Heart right ventricle (tissue), 16 donors: ENCODE measurements at regions of chr16 and their contacts with region 1.

Region 1: GRCh38 chr16:30874821-30875717 is 18.8 kb downstream of the BCL7C start:
- DNase-seq: peak; percentile 91 to 93
- ATAC-seq: peak; percentile 98 to 100 (median 99)
- H3K4me3 ChIP-seq: peak overlapping the region; percentile 48 to 91 (median 82)
- H3K27ac ChIP-seq: peak overlapping the region; percentile 63 to 98 (median 94)
- H3K4me1 ChIP-seq: peaks cover 9 to 35% (median 24%) of the 10 kb centered on the region in 9 donors
- H3K27me3 ChIP-seq: no peaks in the 10 kb centered on the region
- CTCF ChIP-seq: peak in 1 of 9 donors; percentile 18

Region 2: DNA sequence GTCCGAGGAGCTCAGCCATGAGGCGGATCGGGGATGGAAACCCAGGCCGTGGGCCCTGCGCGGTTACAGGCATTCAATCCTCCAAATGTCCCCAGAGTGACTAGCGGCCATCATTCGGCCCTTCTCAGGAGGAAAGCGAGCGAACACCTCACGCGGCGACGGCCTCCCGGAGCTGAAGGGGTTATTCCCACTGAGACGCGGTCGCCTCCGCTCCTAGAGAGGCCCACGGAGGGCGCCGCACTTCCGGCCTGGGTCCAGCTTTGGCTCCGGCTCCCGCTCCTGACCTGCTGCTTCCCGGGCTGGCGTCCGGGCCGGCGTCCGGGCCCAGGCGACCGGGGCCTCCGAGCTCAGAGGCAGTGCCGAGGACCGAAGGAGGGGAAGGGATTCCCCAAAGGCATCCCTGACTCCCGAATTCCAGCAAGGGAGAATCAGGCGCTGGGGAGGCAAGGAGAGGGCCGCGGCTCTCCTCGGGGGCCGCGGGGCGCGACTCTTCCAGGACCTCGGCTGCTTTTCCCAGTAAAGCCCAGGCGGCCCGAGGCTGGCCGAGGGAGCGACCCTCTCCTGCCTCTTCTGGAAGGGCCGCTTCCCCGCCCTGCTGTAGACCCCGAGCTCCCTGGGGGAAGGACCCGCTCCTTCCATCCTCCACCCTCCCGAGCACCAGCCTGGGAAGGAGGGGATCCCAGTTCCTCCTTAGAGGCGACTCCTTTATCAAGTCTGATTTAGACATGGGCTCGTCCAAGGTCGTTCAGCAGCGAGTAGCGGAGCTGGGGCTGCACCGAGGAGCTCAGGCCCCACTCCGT is 69.5 kb before region 1 on chr16:
- intact Hi-C with region 1: loop called in 1 of 10 experiments (anchors 10 kb)
- DNase-seq: peak; percentile 90 to 91
- ATAC-seq: peak; percentile 96 to 98 (median 98)
- H3K4me3 ChIP-seq: peak overlapping the region; percentile 44 to 89 (median 78)
- H3K27ac ChIP-seq: peak overlapping the region; percentile 87 to 99 (median 94)
- H3K4me1 ChIP-seq: peaks cover 0 to 27% (median 19%) of the 10 kb centered on the region in 9 donors
- H3K27me3 ChIP-seq: no peaks in the 10 kb centered on the region
- CTCF ChIP-seq: peak in 2 of 9 donors; percentile 18 to 27

Region 3: GRCh38 chr16:30893744-30894539 is 18.9 kb after region 1 on chr16 and contains the start of gene BCL7C:
- intact Hi-C with region 1: loop called in 2 of 10 experiments (anchors 2 kb)
- DNase-seq: peak; percentile 94 to 96
- ATAC-seq: peak; percentile 70 to 89 (median 86)
- H3K4me3 ChIP-seq: peak within 1 kb of the TSS; percentile 73 to 100 (median 94)
- H3K27ac ChIP-seq: peak within 1 kb of the TSS; percentile 92 to 100 (median 97)
- H3K4me1 ChIP-seq: peaks cover 13 to 48% (median 36%) of the 10 kb centered on the region in 9 donors
- H3K27me3 ChIP-seq: no peaks in the 10 kb centered on the region
- CTCF ChIP-seq: peak in 8 of 9 donors; percentile 37 to 81 (median 58)
- total RNA-seq, gene BCL7C: 24.2 to 31.3 (median 27.0) TPM

Region 4: DNA sequence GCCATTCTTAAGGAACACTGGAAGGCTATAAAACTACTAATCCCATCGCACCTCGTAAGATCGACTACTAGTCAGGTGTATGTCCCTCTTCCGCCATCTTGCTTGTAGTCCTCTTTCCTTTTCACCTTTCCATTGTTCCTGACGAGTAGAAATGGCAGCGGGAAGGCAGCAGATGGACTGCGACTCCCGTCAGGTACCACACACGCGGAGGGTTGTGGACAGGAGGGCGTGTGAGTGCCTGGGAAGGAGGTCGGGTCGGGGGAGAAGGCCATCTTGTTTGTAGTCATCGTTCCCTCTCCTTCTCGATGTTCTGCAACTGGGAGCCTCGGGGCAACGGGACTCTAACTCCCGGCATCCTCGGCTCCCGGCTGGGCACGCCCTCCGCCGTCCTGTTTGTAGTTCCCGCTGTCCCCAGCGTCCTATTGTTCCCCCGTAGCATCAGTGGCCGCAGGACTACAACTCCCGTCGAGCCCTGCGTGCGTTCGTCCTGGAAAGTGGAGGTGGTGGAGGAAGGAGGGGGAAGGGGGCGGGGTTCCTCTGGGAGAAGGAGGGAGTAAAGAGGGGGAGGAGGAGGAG is 48.0 kb after region 1 on chr16:
- intact Hi-C with region 1: loop called in 1 of 10 experiments (anchors 2 kb)
- DNase-seq: peak; percentile 99 to 100
- ATAC-seq: peak; percentile 80 to 89 (median 86)
- H3K4me3 ChIP-seq: peak overlapping the region; percentile 57 to 89 (median 73)
- H3K27ac ChIP-seq: peak overlapping the region; percentile 86 to 97 (median 94)
- H3K4me1 ChIP-seq: peaks cover 0 to 24% (median 16%) of the 10 kb centered on the region in 9 donors
- H3K27me3 ChIP-seq: no peaks in the 10 kb centered on the region
- CTCF ChIP-seq: no peak